ENCODE measurements at regions of chr4 and their contacts with region 1.

Region 1: GRCh38 chr4:129641179-129641578 is 545.2 kb downstream of the C4orf33 start:
- DNase-seq: peak in 38 of 42 donors; percentile 18 to 88 (median 64)

Region 2: DNA sequence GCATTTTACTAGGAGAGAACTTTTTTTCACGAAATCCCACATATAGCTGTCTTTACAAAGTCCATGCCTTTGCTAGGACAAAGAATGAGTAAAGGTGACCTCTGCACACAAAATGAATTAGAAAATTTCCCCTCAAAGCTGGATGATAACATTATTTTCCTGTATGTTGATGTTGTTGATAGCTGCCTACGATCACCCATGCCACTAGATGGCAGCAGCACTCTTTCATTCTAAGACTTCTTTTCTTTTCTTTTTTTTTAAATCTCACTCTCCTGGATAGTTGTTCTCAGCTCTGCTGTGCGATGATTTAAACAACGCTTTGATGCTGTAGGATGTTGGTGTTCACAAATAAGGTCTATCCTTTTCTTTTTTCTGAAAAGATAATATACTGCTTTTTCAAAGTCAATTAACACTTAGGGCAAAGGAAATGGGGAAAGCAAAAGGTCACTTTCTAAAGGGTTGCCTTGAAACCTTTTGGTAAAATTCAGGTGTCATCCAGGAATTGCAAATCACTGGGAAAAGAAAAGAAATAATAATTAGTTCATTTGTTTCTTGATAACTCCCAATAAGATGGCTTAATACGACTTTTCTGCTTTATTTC is 278.4 kb before region 1 on chr4:
- intact Hi-C with region 1: loop called (anchors 2 kb)
- DNase-seq: peak in 37 of 42 donors; percentile 11 to 83 (median 53)